ENCODE measurements at regions of chr13 and their contacts with region 1.

Region 1: DNA sequence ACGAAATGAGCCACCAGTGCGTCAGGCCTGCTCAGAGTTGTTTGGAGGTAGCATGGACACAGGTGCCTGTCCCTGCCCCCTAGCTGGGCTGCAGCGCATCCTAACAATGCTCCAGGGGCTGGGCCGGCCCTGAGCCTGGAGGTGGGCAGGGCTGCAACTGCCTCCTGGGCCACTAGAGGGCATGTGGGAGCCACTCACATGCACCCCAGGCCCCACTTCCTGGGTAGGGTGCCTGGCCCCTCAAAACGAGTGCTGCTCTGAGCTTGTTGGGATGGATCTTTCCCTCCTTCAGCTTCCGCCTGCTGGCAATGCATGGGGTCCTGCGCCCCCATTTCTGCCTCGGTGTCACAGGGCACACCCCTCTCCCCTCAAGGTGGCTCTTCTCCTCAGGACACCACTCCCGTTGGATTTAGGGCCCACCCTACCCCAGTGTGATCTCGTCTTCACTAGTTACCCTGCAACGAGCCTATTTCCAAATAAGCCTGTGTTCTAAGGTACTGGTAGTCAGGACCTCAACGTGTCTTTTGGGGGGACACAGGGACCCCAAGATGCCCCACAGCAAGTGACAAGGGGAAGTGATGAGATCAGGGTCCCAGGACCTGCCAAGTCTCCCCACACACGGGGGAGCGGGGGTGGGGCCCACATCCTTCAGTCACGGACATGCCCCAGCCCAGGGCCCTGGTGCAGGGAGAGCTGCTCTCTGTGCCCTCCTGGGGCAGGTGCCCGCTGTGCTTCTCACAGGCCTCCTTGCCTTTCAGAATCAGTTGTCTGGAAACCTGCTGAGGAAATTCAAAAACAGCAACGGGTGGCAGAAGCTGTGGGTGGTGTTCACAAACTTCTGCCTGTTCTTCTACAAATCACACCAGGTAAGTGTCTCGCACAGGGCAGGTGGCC is 131.3 kb downstream of the STK24 start:
- DNase-seq: peak; percentile 17
- ATAC-seq: peak; percentile 97
- H3K4me3 ChIP-seq: no peak overlapping the region
- H3K27ac ChIP-seq: peak overlapping the region; percentile 53
- H3K4me1 ChIP-seq: peaks cover 6% of the 10 kb centered on the region
- H3K27me3 ChIP-seq: no peaks in the 10 kb centered on the region
- CTCF ChIP-seq: peak; percentile 90 to 100 (median 98); a peak in 5 of 6 replicates
- EP300 ChIP-seq: no peak
- POLR2A ChIP-seq: no peak; the same call in 1 of the 2 replicates
- RAD21 ChIP-seq: peak; percentile 93

Region 2: GRCh38 chr13:98216135-98216565 is 229.4 kb before region 1 on chr13:
- CTCF ChIA-PET with region 1: no interaction called
- POLR2A ChIA-PET with region 1: no interaction called
- RAD21 ChIA-PET with region 1: no interaction called
- SMC1A ChIA-PET with region 1: no interaction called
- in situ Hi-C with region 1: no loop called
- intact Hi-C with region 1: no loop called
- DNase-seq: no peak
- ATAC-seq: no peak
- H3K4me3 ChIP-seq: no peak overlapping the region
- H3K27ac ChIP-seq: no peak overlapping the region
- H3K4me1 ChIP-seq: no peaks in the 10 kb centered on the region
- H3K27me3 ChIP-seq: no peaks in the 10 kb centered on the region
- CTCF ChIP-seq: no peak
- EP300 ChIP-seq: no peak
- POLR2A ChIP-seq: no peak
- RAD21 ChIP-seq: no peak

Region 3: DNA sequence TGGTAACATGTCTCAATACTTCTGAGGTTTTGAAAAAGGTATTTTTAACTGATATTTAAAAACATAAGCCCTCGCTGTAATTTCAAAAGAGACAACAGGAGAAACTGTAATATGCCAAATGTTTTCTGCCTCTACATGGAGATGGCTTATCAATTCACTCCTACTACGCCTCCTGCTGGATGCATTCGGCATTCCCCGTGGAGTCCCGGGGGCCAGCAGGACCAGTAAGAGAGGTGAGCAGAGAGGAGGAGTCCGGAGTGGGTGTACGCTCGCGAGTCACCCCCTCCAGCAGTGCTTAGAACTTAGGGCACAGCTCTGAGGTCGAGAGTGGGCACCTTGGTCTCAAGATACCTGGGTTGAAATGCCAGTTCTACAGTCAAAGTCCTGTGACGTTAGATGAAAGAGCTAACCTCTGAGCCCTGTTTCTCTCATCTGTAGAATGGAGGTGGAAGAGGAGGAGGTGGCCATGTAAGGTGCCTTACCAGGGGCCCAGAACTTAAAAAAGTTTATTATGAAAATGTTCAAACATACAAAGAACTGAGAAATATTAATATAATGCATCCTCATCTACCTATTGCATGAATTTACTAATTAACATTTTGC is 21.1 kb after region 1 on chr13:
- CTCF ChIA-PET with region 1: interaction called, 13 read pairs
- POLR2A ChIA-PET with region 1: no interaction called
- RAD21 ChIA-PET with region 1: interaction called, 3 read pairs
- SMC1A ChIA-PET with region 1: interaction called, 7 read pairs
- in situ Hi-C with region 1: no loop called
- intact Hi-C with region 1: no loop called
- DNase-seq: no peak
- ATAC-seq: peak; percentile 78
- H3K4me3 ChIP-seq: no peak overlapping the region
- H3K27ac ChIP-seq: no peak overlapping the region
- H3K4me1 ChIP-seq: no peaks in the 10 kb centered on the region
- H3K27me3 ChIP-seq: no peaks in the 10 kb centered on the region
- CTCF ChIP-seq: peak; percentile 31 to 65 (median 61); a peak in 5 of 6 replicates
- EP300 ChIP-seq: no peak
- POLR2A ChIP-seq: no peak
- RAD21 ChIP-seq: peak; percentile 37

Region 4: DNA sequence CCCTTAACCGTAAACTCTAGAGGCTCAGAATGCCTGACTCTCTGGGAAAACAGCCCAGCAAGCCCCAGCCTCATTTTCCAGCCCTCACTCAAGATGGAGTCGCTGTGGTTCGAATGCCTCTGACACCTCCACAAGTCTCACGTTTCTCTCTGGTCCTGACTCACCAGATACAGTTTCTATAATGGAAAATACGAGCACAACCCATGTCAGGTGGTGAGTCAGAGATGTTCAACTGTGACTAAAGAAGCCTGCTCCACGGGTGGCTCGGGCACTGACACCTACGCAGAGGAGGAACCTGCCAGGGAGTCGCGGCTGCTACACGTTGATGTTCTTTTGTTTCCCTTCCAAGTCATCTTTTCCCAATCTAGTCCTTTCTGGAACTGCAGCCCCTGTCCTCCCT is 218.5 kb after region 1 on chr13:
- CTCF ChIA-PET with region 1: interaction called, 8 read pairs
- POLR2A ChIA-PET with region 1: no interaction called
- RAD21 ChIA-PET with region 1: interaction called, 6 read pairs
- SMC1A ChIA-PET with region 1: interaction called, 12 read pairs
- in situ Hi-C with region 1: loop called (anchors 5 kb)
- intact Hi-C with region 1: no loop called
- DNase-seq: no peak
- ATAC-seq: peak; percentile 29
- H3K4me3 ChIP-seq: no peak overlapping the region
- H3K27ac ChIP-seq: no peak overlapping the region
- H3K4me1 ChIP-seq: no peaks in the 10 kb centered on the region
- H3K27me3 ChIP-seq: no peaks in the 10 kb centered on the region
- CTCF ChIP-seq: no peak
- EP300 ChIP-seq: no peak
- POLR2A ChIP-seq: no peak
- RAD21 ChIP-seq: no peak